Heart right ventricle (tissue), 16 donors: ENCODE measurements at regions of chr3 and their contacts with region 1.

Region 1: GRCh38 chr3:38117748-38118420 is 19.0 kb downstream of the ACAA1 start:
- DNase-seq: peak; percentile 38 to 62
- ATAC-seq: peak; percentile 45 to 79 (median 68)
- H3K4me3 ChIP-seq: no peak overlapping the region
- H3K27ac ChIP-seq: no peak overlapping the region
- H3K4me1 ChIP-seq: peaks cover 0 to 14% (median 4%) of the 10 kb centered on the region in 9 donors
- H3K27me3 ChIP-seq: peaks cover 0 to 6% (median 0%) of the 10 kb centered on the region in 7 donors
- CTCF ChIP-seq: peak; percentile 38 to 75 (median 68)

Region 2: GRCh38 chr3:38017442-38018295 is 100.2 kb before region 1 on chr3:
- intact Hi-C with region 1: no loop called
- DNase-seq: no peak
- ATAC-seq: peak in 3 of 8 donors; percentile 5 to 16 (median 5)
- H3K4me3 ChIP-seq: no peak overlapping the region
- H3K27ac ChIP-seq: no peak overlapping the region
- H3K4me1 ChIP-seq: peaks cover 0 to 16% (median 0%) of the 10 kb centered on the region in 9 donors
- H3K27me3 ChIP-seq: no peaks in the 10 kb centered on the region
- CTCF ChIP-seq: no peak

Region 3: GRCh38 chr3:38070013-38070412 is 47.9 kb before region 1 on chr3:
- intact Hi-C with region 1: no loop called
- DNase-seq: no peak
- ATAC-seq: no peak
- H3K4me3 ChIP-seq: no peak overlapping the region
- H3K27ac ChIP-seq: no peak overlapping the region
- H3K4me1 ChIP-seq: no peaks in the 10 kb centered on the region
- H3K27me3 ChIP-seq: no peaks in the 10 kb centered on the region
- CTCF ChIP-seq: no peak

Region 4: DNA sequence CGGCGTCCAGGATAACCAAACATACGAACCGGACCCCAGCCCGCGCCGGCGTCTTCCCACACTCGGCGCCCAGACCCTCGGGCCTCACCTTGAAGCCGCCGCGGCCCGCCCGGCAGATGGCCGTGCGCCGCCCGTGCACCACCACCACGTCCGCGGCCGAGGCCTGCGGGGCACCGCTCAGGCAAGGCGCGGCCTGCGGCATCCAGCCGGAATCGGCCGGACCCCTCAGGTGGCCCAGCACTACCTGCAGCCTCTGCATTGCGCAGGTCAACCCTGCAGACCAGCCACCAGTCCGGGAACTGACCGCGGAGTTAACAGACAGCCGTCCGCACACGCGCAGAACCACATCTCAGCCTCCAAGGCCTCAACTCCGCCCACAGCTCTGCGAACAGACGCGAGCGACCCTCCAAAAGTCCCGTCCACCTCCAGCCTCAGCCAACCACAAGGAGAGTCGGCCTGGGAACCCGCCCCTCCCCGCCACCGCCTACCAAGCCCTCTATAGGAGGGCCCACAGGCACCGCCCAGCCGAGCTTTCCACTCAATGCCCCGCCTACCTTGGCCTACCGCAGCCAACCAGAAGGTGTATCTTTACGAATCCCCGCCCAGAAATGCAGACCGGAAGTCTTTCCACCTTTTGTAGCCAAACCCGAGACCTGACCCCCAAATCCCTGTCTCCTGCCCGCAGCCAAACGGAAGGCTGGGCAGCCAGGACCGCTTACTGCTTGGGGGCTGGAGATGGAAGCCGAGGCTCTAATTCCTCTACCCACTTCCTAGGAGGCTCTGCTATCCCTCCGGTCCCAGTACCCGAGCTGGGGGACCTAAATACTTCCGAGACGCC is 19.1 kb after region 1 on chr3 and contains the start of gene ACAA1:
- intact Hi-C with region 1: no loop called
- DNase-seq: peak; percentile 99 to 100
- ATAC-seq: peak; percentile 96 to 98 (median 98)
- H3K4me3 ChIP-seq: peak within 1 kb of the TSS; percentile 63 to 100 (median 94)
- H3K27ac ChIP-seq: peak within 1 kb of the TSS; percentile 86 to 97 (median 94)
- H3K4me1 ChIP-seq: peaks cover 8 to 58% (median 42%) of the 10 kb centered on the region in 9 donors
- H3K27me3 ChIP-seq: no peaks in the 10 kb centered on the region
- CTCF ChIP-seq: peak in 3 of 9 donors; percentile 3 to 20 (median 9)
- total RNA-seq, gene ACAA1: 102 to 136 (median 117) TPM

Region 5: GRCh38 chr3:38346587-38347410 is 228.9 kb after region 1 on chr3 and contains the start of gene XYLB:
- intact Hi-C with region 1: loop called in 3 of 10 experiments (anchors 5 to 10 kb)
- DNase-seq: peak; percentile 79 to 89
- ATAC-seq: peak; percentile 96 to 100 (median 99)
- H3K4me3 ChIP-seq: peak within 1 kb of the TSS; percentile 27 to 87 (median 82)
- H3K27ac ChIP-seq: peak within 1 kb of the TSS in 6 of 10 donors; percentile 29 to 75 (median 48)
- H3K4me1 ChIP-seq: peaks cover 0 to 22% (median 9%) of the 10 kb centered on the region in 9 donors
- H3K27me3 ChIP-seq: no peaks in the 10 kb centered on the region
- CTCF ChIP-seq: peak; percentile 68 to 95 (median 87)
- total RNA-seq, gene XYLB: 0.42 to 1.7 (median 0.73) TPM